ENCODE measurements at regions of chr4 and their contacts with region 1.

Region 1: GRCh38 chr4:146329042-146329716 is 114.8 kb downstream of the REELD1 start:
- DNase-seq: no peak
- ATAC-seq: no peak
- H3K4me3 ChIP-seq: no peak overlapping the region
- H3K27ac ChIP-seq: no peak overlapping the region
- H3K4me1 ChIP-seq: no peaks in the 10 kb centered on the region
- H3K27me3 ChIP-seq: no peaks in the 10 kb centered on the region

Region 2: GRCh38 chr4:146273204-146273901 is 55.8 kb before region 1 on chr4:
- intact Hi-C with region 1: loop called in 1 of 4 experiments (anchors 2 kb)
- DNase-seq: no peak
- ATAC-seq: no peak
- H3K4me3 ChIP-seq: no peak overlapping the region
- H3K27ac ChIP-seq: no peak overlapping the region
- H3K4me1 ChIP-seq: no peaks in the 10 kb centered on the region
- H3K27me3 ChIP-seq: no peaks in the 10 kb centered on the region